T-cell (primary cell): ENCODE measurements at regions of chr5 and their contacts with region 1.

Region 1: DNA sequence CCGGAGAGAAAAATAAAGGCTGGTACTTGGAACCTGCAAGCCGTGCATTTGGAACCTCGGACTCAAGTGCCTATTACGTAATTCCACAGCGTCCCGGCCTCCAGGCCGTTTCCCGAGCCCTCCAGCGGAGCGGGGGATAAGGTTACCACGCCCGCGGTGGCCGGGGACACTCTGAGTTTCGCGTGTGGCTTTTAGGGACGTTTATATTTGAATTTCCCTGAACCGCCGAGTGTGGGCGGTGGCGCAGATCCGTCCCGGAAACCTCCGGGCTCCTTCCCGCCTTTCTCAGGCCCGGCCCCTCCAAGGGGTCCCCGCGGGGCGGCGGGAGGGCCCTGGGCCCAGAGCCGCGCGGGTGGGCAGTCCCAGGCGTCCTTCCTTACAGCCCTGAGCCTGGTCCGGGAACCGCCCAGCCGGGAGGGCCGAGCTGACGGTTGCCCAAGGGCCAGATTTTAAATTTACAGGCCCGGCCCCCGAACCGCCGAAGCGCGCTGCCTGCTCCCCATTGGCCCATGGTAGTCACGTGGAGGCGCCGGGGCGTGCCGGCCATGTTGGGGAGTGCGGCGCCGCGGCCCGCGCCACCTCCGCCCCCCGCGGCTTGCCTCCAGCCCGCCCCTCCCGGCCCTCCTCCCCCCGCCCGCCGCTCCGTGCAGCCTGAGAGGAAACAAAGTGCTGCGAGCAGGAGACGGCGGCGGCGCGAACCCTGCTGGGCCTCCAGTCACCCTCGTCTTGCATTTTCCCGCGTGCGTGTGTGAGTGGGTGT is at the start of gene LMNB1:
- DNase-seq: peak; percentile 86 to 96 (median 93)
- ATAC-seq: peak; percentile 76 to 82 (median 77)
- H3K4me3 ChIP-seq: peak within 1 kb of the TSS; percentile 91 to 98
- H3K4me3 Mint-ChIP-seq: peak within 1 kb of the TSS; percentile 94 to 95 (median 95)
- H3K27ac ChIP-seq: peak within 1 kb of the TSS; percentile 88
- H3K27ac Mint-ChIP-seq: peak within 1 kb of the TSS; percentile 89 to 95
- H3K4me1 ChIP-seq: peaks cover 11 to 22% of the 10 kb centered on the region in 2 experiments
- H3K4me1 Mint-ChIP-seq: peaks cover 18 to 33% (median 32%) of the 10 kb centered on the region in 3 donors
- H3K27me3 ChIP-seq: peaks cover 0 to 6% of the 10 kb centered on the region in 2 experiments
- H3K27me3 Mint-ChIP-seq: no peaks in the 10 kb centered on the region
- total RNA-seq, gene LMNB1: 25.6 to 36.6 (median 30.9) TPM

Region 2: DNA sequence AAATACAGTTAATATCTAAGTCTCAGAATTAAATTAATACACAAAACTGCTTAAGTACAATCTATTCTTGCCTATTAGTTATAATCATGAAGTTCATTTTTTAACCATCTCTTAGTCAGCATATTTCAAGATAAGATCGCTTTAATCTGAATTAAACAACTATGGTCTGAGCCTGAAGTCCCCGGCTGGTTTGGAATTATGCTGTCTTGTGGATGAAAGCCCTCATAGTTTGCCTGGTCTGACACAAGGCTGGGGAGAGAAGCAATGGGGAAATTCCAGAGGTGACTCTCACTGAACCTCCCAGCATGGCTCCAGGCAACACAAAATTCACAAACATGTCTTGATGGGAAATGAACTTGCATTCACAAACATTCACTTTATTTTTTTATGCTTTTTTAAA is 381.5 kb before region 1 on chr5:
- CTCF ChIA-PET with region 1: no interaction called
- POLR2A ChIA-PET with region 1: no interaction called
- DNase-seq: no peak
- ATAC-seq: no peak
- H3K4me3 ChIP-seq: no peak overlapping the region
- H3K4me3 Mint-ChIP-seq: no peak overlapping the region
- H3K27ac ChIP-seq: no peak overlapping the region
- H3K27ac Mint-ChIP-seq: no peak overlapping the region
- H3K4me1 ChIP-seq: no peaks in the 10 kb centered on the region
- H3K4me1 Mint-ChIP-seq: no peaks in the 10 kb centered on the region
- H3K27me3 ChIP-seq: no peaks in the 10 kb centered on the region
- H3K27me3 Mint-ChIP-seq: peaks cover 0 to 4% of the 10 kb centered on the region in 2 donors

Region 3: GRCh38 chr5:126659805-126660482 is 116.7 kb before region 1 on chr5:
- CTCF ChIA-PET with region 1: interaction called in 1 of 2 experiments, 11 read pairs
- POLR2A ChIA-PET with region 1: no interaction called
- DNase-seq: no peak
- ATAC-seq: no peak
- H3K4me3 ChIP-seq: no peak overlapping the region
- H3K4me3 Mint-ChIP-seq: no peak overlapping the region
- H3K27ac ChIP-seq: no peak overlapping the region
- H3K27ac Mint-ChIP-seq: no peak overlapping the region
- H3K4me1 ChIP-seq: no peaks in the 10 kb centered on the region
- H3K4me1 Mint-ChIP-seq: no peaks in the 10 kb centered on the region
- H3K27me3 ChIP-seq: no peaks in the 10 kb centered on the region
- H3K27me3 Mint-ChIP-seq: peaks cover 1 to 2% of the 10 kb centered on the region in 2 donors

Region 4: GRCh38 chr5:126676195-126676624 is 100.5 kb before region 1 on chr5:
- CTCF ChIA-PET with region 1: interaction called, 29 to 69 read pairs
- POLR2A ChIA-PET with region 1: no interaction called
- DNase-seq: peak; percentile 30 to 85 (median 58)
- ATAC-seq: peak; percentile 73 to 94 (median 84)
- H3K4me3 ChIP-seq: no peak overlapping the region
- H3K4me3 Mint-ChIP-seq: no peak overlapping the region
- H3K27ac ChIP-seq: no peak overlapping the region
- H3K27ac Mint-ChIP-seq: no peak overlapping the region
- H3K4me1 ChIP-seq: peaks cover 0 to 3% of the 10 kb centered on the region in 2 experiments
- H3K4me1 Mint-ChIP-seq: peaks cover 3 to 6% (median 3%) of the 10 kb centered on the region in 3 donors
- H3K27me3 ChIP-seq: no peaks in the 10 kb centered on the region
- H3K27me3 Mint-ChIP-seq: no peaks in the 10 kb centered on the region

Region 5: GRCh38 chr5:126801992-126802294 is 25.3 kb after region 1 on chr5:
- CTCF ChIA-PET with region 1: interaction called in 1 of 2 experiments, 20 read pairs
- POLR2A ChIA-PET with region 1: interaction called, 3 read pairs
- DNase-seq: peak in 5 of 35 experiments; percentile 8 to 57 (median 15)
- ATAC-seq: peak in 1 of 4 experiments; percentile 39
- H3K4me3 ChIP-seq: no peak overlapping the region
- H3K4me3 Mint-ChIP-seq: no peak overlapping the region
- H3K27ac ChIP-seq: no peak overlapping the region
- H3K27ac Mint-ChIP-seq: no peak overlapping the region
- H3K4me1 ChIP-seq: peaks cover 0 to 2% of the 10 kb centered on the region in 2 experiments
- H3K4me1 Mint-ChIP-seq: peaks cover 29 to 40% (median 39%) of the 10 kb centered on the region in 3 donors
- H3K27me3 ChIP-seq: no peaks in the 10 kb centered on the region
- H3K27me3 Mint-ChIP-seq: no peaks in the 10 kb centered on the region

Region 6: GRCh38 chr5:126808521-126808988 is 31.9 kb after region 1 on chr5:
- CTCF ChIA-PET with region 1: interaction called, 3 to 61 read pairs
- POLR2A ChIA-PET with region 1: interaction called, 4 to 41 read pairs
- DNase-seq: peak in 1 of 35 experiments; percentile 47
- ATAC-seq: no peak
- H3K4me3 ChIP-seq: no peak overlapping the region
- H3K4me3 Mint-ChIP-seq: no peak overlapping the region
- H3K27ac ChIP-seq: no peak overlapping the region
- H3K27ac Mint-ChIP-seq: peak overlapping the region in 1 of 2 donors; percentile 4
- H3K4me1 ChIP-seq: peaks cover 6 to 9% of the 10 kb centered on the region in 2 experiments
- H3K4me1 Mint-ChIP-seq: peaks cover 26 to 38% (median 36%) of the 10 kb centered on the region in 3 donors
- H3K27me3 ChIP-seq: no peaks in the 10 kb centered on the region
- H3K27me3 Mint-ChIP-seq: no peaks in the 10 kb centered on the region